ENCODE measurements at regions of chr11 and their contacts with region 1.

Region 1: DNA sequence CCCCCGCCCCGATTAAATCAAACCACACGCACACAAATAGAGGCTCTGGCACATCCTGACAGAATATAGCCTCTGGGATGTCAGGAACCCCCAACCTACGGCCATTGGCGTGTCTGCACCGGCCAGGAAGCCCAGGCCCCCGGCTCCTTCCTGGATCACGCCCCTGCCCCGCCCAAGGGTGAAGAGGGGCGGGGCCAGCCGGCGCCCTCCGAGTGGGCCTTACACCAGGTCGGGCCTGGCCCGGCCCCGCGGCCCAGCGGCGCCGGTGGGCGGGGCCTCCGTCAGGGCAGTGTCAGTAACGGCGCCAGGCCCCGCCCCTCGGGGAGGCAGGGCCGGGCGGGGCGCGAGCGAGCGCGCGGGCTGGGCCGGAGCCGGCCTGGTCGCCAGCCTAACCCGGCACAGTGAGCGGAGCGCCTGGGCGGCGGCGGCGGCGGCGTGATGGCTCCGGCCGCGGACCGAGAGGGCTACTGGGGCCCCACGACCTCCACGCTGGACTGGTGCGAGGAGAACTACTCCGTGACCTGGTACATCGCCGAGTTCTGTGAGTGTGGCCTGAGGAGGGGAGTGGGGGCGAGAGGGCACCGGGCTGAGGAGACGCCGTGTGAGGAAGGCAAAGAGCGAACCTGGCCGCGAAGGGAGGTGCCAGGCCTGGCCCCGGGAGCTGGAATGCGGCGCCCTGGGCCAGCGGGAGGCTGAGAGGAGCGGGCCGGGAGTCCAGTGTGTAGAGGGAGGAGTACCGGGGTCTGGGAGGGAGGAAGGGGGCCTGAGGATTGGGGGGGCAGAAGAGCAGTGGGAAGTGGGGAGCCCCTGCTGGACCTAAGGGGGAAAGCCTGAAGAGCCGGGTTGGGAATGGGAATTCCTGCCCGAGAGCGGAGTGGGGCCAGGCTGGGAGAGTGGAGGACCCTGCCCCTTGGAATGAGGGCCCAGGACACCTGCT is at the start of gene ACER3:
- DNase-seq: peak; percentile 95
- ATAC-seq: peak; percentile 99
- total RNA-seq, gene ACER3: 12.5 to 18.1 TPM

Region 2: GRCh38 chr11:76714499-76714898 is 146.3 kb before region 1 on chr11:
- intact Hi-C with region 1: no loop called
- DNase-seq: no peak
- ATAC-seq: no peak

Region 3: GRCh38 chr11:76919887-76920746 is 59.3 kb after region 1 on chr11:
- intact Hi-C with region 1: loop called in 1 of 2 experiments (anchors 2 kb)
- DNase-seq: peak; percentile 78
- ATAC-seq: peak; percentile 93 to 97

Measured in left cardiac atrium (tissue), 4 donors.